HCT116 (cell line): ENCODE measurements at regions of chr20 and their contacts with region 1.

Region 1: GRCh38 chr20:52379723-52380336 is 188.3 kb upstream of the ZFP64 start:
- DNase-seq: no peak
- ATAC-seq: 0 out of 2 replicates have a peak, but pooled peaks have one; percentile 38
- H3K4me3 ChIP-seq: no peak overlapping the region
- H3K27ac ChIP-seq: no peak overlapping the region
- H3K4me1 ChIP-seq: no peaks in the 10 kb centered on the region
- H3K27me3 ChIP-seq: no peaks in the 10 kb centered on the region; the same call in 1 of the 2 replicates
- CTCF ChIP-seq: peak; percentile 41 to 96 (median 93); a peak in 5 of 6 replicates
- POLR2A ChIP-seq: no peak
- RAD21 ChIP-seq: peak; percentile 58

Region 2: DNA sequence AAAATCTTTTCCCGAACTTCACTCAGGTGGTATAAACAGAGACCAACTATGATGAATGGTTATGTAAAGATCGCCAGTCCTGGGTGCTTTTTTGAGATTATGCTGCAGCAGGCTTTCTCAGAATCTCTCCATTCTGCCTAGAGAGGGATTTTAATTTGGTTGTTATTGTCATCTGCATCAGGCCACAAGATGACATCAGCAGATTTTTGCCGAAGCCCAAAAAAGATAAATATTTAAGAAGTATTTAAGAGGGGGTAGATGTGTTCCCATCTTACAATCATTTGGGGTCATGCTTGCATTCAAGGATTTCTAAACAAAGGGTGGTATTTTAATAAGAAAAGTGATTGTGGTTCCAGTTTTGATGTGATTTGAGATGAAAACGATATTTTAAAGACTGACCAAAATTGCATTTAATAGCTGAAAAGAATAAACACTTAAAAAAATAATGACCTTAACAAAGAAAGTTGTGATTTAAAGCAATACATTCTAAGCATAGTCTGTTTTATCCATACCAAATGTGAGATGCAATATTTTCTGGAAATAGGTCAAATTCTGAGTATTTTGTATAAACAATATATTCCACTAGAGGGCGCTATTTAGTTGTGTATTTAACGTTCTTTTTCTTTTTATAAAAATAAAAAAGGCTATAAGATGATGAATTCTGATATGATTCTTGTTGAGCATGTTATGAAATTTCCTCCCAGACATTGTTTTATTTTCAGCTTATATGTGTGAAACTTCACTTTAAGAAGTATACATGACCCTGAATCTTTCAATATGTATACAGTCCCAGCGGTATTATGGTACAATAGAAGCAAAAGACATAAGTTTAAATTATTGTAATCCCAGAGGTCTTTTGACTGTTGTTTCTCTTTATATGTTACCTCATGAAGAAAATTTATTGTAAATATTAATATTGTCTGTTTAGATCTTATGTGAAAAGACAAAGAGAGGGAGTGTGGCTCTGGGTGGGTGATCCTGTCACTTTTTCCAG is 137.3 kb before region 1 on chr20:
- CTCF ChIA-PET with region 1: no interaction called
- POLR2A ChIA-PET with region 1: no interaction called
- RAD21 ChIA-PET with region 1: no interaction called
- intact Hi-C with region 1: loop called (anchors 5 kb)
- DNase-seq: no peak
- ATAC-seq: no peak
- H3K4me3 ChIP-seq: no peak overlapping the region
- H3K27ac ChIP-seq: no peak overlapping the region
- H3K4me1 ChIP-seq: no peaks in the 10 kb centered on the region
- H3K27me3 ChIP-seq: no peaks in the 10 kb centered on the region
- CTCF ChIP-seq: peak in 2 of 3 experiments; percentile 26 to 71; a peak in 3 of 6 replicates
- POLR2A ChIP-seq: no peak
- RAD21 ChIP-seq: peak; percentile 45

Region 3: GRCh38 chr20:52312132-52312729 is 67.6 kb before region 1 on chr20:
- CTCF ChIA-PET with region 1: interaction called, 3 read pairs
- POLR2A ChIA-PET with region 1: no interaction called
- RAD21 ChIA-PET with region 1: no interaction called
- intact Hi-C with region 1: loop called (anchors 2 kb)
- DNase-seq: peak; percentile 54
- ATAC-seq: peak; percentile 75
- H3K4me3 ChIP-seq: no peak overlapping the region
- H3K27ac ChIP-seq: no peak overlapping the region
- H3K4me1 ChIP-seq: no peaks in the 10 kb centered on the region
- H3K27me3 ChIP-seq: peaks cover 20% of the 10 kb centered on the region
- CTCF ChIP-seq: peak; percentile 47 to 88 (median 65); a peak in 4 of 6 replicates
- POLR2A ChIP-seq: no peak
- RAD21 ChIP-seq: peak; percentile 56